Activated T-helper 1 cell treated with anti-CD3 and anti-CD28 coated beads, Interleukin-12 subunit alpha, Interleukin-12 subunit beta, Interleukin-2, Interleukin-4 antibody, amounts not matched to agents 30 ng/mL and 10 ng/mL and 1 ng/mL, durations not matched to agents 14 hours and 24 hours and 36 hours (primary cell): ENCODE measurements at regions of chr6 and their contacts with region 1.

Region 1: DNA sequence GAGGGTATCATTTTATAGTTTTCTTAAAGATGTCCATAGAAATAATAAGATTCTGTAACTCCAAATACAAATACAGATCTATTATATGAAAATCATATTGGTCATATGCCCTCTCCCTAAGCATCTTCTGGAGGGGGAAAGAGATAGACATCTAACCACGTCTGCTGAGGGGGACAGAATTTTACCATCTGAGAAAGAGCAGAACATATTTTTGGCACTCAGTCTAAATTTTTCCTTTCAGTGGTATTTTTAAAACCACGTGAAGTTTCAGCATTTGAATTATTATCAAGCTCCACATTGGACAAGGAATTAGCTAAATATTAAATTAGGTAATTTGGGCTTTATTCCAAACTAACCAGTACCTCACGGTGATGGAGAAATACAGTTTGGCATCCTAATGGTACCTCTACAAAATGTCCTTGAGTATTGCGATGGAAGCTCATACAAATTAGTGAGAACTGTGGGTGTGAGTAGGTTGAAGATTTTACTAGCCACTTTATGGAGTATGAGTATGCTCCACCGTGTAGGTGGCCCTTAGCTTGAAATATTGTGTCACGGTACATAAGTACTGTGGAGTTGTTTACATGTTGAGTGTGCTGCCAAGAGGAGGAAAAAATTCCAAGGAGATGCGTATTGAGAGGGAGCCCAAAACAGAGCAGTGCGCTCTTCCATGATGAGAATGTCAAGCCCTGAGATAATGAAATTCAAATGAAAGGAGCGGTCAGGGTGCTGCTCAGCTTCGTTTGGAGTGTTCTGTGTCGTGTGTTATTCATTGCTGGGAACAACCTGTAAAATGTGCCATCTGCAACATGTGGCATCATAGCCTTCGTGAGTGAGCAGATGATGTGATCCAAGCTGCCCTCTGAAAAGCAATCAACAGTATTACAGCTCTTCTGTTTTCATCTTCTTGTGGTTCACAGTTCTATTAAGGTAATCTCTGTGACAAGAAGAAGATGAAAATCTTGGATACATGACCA is 48.4 kb upstream of the PHACTR2 start:
- DNase-seq: no peak
- H3K4me3 Mint-ChIP-seq: peak overlapping the region; percentile 34
- H3K27ac Mint-ChIP-seq: peak overlapping the region; percentile 76
- H3K4me1 Mint-ChIP-seq: peaks cover 45% of the 10 kb centered on the region
- H3K27me3 Mint-ChIP-seq: no peaks in the 10 kb centered on the region

Region 2: GRCh38 chr6:143615785-143616184 is 13.6 kb before region 1 on chr6:
- intact Hi-C with region 1: loop called (anchors 1 kb)
- DNase-seq: no peak
- H3K4me3 Mint-ChIP-seq: no peak overlapping the region
- H3K27ac Mint-ChIP-seq: no peak overlapping the region
- H3K4me1 Mint-ChIP-seq: peaks cover 41% of the 10 kb centered on the region
- H3K27me3 Mint-ChIP-seq: peaks cover 1% of the 10 kb centered on the region

Region 3: GRCh38 chr6:143647191-143647590 is 17.8 kb after region 1 on chr6:
- intact Hi-C with region 1: loop called (anchors 1 kb)
- DNase-seq: no peak
- H3K4me3 Mint-ChIP-seq: peak overlapping the region; percentile 12
- H3K27ac Mint-ChIP-seq: peak overlapping the region; percentile 59
- H3K4me1 Mint-ChIP-seq: peaks cover 27% of the 10 kb centered on the region
- H3K27me3 Mint-ChIP-seq: no peaks in the 10 kb centered on the region

Region 4: DNA sequence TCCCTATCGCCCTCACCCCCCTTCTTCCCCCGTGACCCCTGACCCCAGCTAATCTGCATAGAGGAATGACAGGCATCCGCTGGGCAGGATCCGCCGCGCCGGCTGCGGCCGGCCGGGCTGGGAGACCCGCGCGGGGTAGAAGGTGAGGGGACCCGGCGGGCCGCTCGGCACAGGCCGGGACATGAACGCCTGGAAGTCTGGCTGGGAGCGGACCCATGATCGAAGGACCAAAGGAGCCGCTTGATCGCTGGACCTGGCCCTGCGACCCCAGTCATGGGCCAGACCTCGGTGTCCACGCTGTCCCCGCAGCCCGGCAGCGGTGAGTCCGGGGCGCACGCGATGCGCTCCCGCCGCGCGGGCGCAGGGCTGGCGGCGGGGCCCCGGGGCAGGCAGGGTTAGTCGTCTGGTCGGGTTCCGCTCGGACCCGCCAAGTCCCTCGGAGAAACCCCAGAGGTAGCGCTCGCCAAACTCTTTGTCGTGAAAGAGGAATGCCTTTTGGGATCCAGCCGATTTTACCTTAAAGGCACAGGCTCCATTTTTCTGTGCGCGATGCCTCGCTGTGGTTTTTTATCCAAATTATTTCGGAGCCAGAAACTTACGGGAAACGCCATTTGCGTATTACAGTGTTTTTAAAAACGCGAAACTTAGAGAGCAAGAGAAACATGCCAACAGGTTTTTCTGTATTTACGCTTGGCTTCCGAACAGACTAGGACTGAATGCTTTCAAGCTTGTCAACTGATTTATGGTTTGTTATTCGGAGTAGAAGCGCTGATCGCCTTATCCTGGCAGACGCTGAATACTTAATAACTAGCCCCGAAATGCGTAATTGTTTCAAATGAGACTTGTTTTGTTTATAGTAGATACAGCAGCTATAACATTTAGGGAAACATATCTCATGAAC is 48.7 kb after region 1 on chr6 and contains the start of gene PHACTR2:
- intact Hi-C with region 1: loop called (anchors 1 kb)
- DNase-seq: peak; percentile 4
- H3K4me3 Mint-ChIP-seq: peak within 1 kb of the TSS; percentile 84
- H3K27ac Mint-ChIP-seq: peak within 1 kb of the TSS; percentile 18
- H3K4me1 Mint-ChIP-seq: peaks cover 33% of the 10 kb centered on the region
- H3K27me3 Mint-ChIP-seq: peaks cover 14% of the 10 kb centered on the region
- total RNA-seq, gene PHACTR2: 63.5 and 64.5 TPM in 2 replicates